CD4-positive, alpha-beta T cell (primary cell): ENCODE measurements at regions of chr10 and their contacts with region 1.

Region 1: GRCh38 chr10:58291538-58292174 is 22.7 kb downstream of the CISD1 start:
- DNase-seq: peak in 8 of 14 experiments; percentile 4 to 69 (median 32)
- ATAC-seq: peak; percentile 74
- H3K4me3 ChIP-seq: no peak overlapping the region
- H3K4me3 Mint-ChIP-seq: no peak overlapping the region
- H3K27ac ChIP-seq: no peak overlapping the region
- H3K27ac Mint-ChIP-seq: no peak overlapping the region
- H3K4me1 ChIP-seq: no peaks in the 10 kb centered on the region
- H3K4me1 Mint-ChIP-seq: no peaks in the 10 kb centered on the region
- H3K27me3 ChIP-seq: no peaks in the 10 kb centered on the region
- H3K27me3 Mint-ChIP-seq: no peaks in the 10 kb centered on the region
- CTCF ChIP-seq: peak; percentile 92

Region 2: DNA sequence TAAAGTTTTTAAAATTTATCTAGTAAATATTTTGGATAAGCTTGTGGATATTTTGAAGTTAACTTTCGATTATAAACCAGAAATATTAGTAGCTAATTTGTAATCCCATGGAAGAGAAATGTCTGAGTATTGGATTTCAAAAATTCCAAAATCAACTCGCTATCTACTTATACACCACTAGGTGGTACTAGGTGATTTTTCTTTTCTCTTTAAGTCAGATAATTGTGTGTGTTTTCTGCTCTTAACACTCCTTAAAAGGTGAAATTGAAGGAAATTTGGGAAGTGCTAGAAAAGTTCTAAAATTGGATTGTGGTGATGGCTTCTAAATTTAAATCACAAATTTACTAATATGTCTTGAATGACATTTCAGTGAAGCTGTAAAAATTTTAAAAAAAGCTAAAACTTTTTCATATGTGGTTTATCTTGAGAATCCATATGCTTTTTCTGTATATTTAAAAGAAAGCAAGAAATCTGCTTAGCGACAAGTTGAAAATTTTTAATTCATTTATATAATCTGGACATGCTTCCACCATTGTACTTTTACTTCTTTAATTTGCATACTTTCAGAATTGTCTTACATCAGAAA is 114.2 kb before region 1 on chr10:
- CTCF ChIA-PET with region 1: interaction called, 29 read pairs
- POLR2A ChIA-PET with region 1: interaction called, 5 read pairs
- intact Hi-C with region 1: loop called (anchors 1 kb)
- DNase-seq: peak in 3 of 14 experiments; percentile 21 to 43 (median 27)
- ATAC-seq: no peak
- H3K4me3 ChIP-seq: no peak overlapping the region
- H3K4me3 Mint-ChIP-seq: no peak overlapping the region
- H3K27ac ChIP-seq: no peak overlapping the region
- H3K27ac Mint-ChIP-seq: no peak overlapping the region
- H3K4me1 ChIP-seq: no peaks in the 10 kb centered on the region
- H3K4me1 Mint-ChIP-seq: no peaks in the 10 kb centered on the region
- H3K27me3 ChIP-seq: no peaks in the 10 kb centered on the region
- H3K27me3 Mint-ChIP-seq: peaks cover 14% of the 10 kb centered on the region
- CTCF ChIP-seq: peak; percentile 72